Activated CD8-positive, alpha-beta memory T cell treated with anti-CD3 and anti-CD28 coated beads, Interleukin-2, amount 10 ng/mL, durations not matched to agents 7 days and 5 days (primary cell): ENCODE measurements at regions of chr1 and their contacts with region 1.

Region 1: GRCh38 chr1:31923901-31924535 is 14.2 kb downstream of the PTP4A2 start:
- DNase-seq: no peak
- ATAC-seq: no peak
- H3K4me3 Mint-ChIP-seq: peak overlapping the region; percentile 70
- H3K27ac Mint-ChIP-seq: peak overlapping the region; percentile 89
- H3K4me1 Mint-ChIP-seq: peaks cover 70% of the 10 kb centered on the region
- H3K27me3 Mint-ChIP-seq: no peaks in the 10 kb centered on the region

Region 2: DNA sequence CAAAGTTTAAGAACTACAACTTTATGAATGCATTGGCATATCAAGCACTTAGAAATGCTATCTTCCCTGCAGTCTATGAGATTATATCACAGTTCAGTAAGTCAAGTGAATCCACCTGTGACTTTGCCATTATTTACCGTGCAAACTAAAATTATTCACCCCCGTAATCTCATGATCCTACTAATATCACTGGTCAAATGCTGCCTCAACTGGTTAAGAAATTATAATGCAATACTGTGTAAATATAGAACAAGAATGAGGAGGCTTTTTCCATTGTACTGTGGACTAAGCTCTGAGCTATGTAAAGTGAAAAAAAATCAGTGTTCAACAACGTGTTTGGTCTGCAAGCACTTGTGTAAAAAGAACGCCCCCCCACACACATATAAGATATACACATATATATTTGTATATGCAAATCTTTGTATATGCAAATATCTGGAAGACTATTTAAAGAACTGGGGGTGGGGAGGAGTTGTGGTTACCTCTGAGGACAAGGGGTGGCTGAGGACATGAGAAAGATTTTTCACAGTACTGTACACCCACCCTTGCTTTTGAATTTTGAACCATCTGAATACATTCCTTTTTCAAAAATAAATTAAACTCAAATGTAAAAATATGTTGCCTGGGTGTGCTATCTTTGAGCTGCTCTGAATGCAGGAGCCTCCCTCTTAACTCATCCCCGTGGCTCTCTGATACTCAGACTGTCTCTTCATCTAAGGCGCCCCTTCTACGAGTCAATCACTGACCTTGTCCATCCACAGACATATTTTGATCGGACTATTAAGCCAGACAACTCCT is 42.9 kb before region 1 on chr1:
- CTCF ChIA-PET with region 1: no interaction called
- DNase-seq: no peak
- ATAC-seq: no peak
- H3K4me3 Mint-ChIP-seq: no peak overlapping the region
- H3K27ac Mint-ChIP-seq: no peak overlapping the region
- H3K4me1 Mint-ChIP-seq: peaks cover 9% of the 10 kb centered on the region
- H3K27me3 Mint-ChIP-seq: no peaks in the 10 kb centered on the region

Region 3: GRCh38 chr1:31910933-31911332 is 13.1 kb before region 1 on chr1:
- CTCF ChIA-PET with region 1: interaction called, 14 read pairs
- DNase-seq: no peak
- ATAC-seq: peak; percentile 69
- H3K4me3 Mint-ChIP-seq: no peak overlapping the region
- H3K27ac Mint-ChIP-seq: peak overlapping the region; percentile 47
- H3K4me1 Mint-ChIP-seq: peaks cover 64% of the 10 kb centered on the region
- H3K27me3 Mint-ChIP-seq: no peaks in the 10 kb centered on the region

Region 4: DNA sequence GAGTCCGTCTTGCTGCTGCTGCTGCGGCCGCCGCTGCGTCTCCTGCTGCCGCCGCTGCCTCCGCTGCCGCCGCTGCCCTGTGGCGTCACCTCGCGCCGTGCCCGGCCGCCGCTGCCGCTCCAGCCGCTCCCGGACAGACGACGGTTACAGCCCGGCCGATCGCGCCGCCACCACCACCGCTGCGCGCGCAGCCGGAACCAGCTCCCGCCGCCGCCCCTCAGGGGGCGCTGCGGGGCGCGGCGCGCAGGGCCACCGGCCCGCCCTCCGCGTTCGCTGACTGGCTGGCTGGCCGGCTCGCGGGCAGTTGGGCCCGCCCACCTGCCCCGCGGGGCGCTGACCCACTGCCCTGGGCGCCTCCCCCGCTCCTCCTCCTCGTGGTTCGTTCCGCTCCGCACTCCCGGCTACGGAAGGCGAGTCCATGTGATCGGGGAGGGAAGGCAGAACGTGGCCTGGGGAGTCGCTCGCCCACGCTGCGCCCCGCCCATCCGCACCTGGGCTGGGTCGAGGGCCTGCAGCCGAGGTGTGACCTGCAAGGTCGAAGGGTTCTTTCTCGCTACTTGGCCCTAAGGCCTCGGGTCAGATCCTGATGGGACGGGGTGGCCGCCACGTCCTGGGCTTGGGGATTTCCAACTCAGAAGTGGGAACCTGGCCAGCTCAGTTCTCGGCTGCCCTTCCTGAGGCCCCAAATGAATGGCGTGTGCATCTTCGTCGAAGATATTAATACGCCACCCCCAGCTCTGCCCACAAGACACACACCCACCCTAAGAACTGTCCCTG is 14.3 kb after region 1 on chr1 and contains the start of gene PTP4A2:
- CTCF ChIA-PET with region 1: interaction called, 45 read pairs
- DNase-seq: peak; percentile 94
- ATAC-seq: peak; percentile 71
- H3K4me3 Mint-ChIP-seq: peak within 1 kb of the TSS; percentile 99
- H3K27ac Mint-ChIP-seq: peak within 1 kb of the TSS; percentile 98
- H3K4me1 Mint-ChIP-seq: peaks cover 69% of the 10 kb centered on the region
- H3K27me3 Mint-ChIP-seq: no peaks in the 10 kb centered on the region
- total RNA-seq, gene PTP4A2: 401 to 507 TPM

Region 5: DNA sequence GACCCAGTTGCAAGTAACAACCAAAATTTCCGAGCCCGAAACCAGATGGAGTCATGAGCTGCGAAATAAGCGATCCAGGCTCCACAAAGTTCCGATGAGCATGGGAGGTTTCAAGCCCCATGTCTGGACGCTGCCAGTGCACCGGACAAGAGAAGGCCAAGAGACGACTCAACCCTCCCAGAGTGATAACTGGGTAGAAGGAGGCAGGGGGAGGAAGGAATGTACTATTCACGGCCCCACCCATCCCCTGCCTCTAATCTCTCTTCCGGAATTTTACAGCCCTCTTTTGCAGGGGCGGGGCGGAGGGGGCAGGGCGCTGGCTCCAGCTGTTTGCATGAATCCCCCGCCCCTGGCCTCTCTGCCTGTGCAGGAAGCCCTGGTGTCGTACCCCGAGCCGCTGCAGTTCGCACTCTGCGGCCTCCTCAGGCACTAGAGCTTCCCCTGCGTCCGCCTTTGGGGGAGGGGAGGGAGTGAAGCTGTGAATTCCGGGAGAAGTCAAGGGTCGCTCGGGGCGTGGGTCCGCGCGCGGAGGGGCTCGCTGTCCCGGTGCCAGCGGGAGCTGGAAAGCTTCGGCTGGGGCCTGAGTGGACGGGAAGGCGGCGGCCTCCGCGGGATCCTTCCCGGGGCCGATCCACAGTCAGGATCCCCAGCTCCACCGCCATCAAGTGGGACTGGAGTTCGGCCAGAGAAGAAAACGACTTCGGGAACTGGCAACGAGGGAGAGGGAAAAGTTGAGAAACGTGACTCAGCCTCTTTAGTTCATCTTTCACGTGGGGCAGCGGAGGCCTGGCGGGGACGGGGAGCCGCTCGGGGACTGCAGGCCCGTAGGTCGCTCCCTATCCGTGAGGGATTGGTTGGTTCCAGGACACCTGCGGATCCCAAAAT is 20.4 kb after region 1 on chr1:
- CTCF ChIA-PET with region 1: interaction called, 43 read pairs
- DNase-seq: peak; percentile 97
- ATAC-seq: peak; percentile 67
- H3K4me3 Mint-ChIP-seq: peak overlapping the region; percentile 77
- H3K27ac Mint-ChIP-seq: peak overlapping the region; percentile 96
- H3K4me1 Mint-ChIP-seq: peaks cover 61% of the 10 kb centered on the region
- H3K27me3 Mint-ChIP-seq: no peaks in the 10 kb centered on the region

Region 6: DNA sequence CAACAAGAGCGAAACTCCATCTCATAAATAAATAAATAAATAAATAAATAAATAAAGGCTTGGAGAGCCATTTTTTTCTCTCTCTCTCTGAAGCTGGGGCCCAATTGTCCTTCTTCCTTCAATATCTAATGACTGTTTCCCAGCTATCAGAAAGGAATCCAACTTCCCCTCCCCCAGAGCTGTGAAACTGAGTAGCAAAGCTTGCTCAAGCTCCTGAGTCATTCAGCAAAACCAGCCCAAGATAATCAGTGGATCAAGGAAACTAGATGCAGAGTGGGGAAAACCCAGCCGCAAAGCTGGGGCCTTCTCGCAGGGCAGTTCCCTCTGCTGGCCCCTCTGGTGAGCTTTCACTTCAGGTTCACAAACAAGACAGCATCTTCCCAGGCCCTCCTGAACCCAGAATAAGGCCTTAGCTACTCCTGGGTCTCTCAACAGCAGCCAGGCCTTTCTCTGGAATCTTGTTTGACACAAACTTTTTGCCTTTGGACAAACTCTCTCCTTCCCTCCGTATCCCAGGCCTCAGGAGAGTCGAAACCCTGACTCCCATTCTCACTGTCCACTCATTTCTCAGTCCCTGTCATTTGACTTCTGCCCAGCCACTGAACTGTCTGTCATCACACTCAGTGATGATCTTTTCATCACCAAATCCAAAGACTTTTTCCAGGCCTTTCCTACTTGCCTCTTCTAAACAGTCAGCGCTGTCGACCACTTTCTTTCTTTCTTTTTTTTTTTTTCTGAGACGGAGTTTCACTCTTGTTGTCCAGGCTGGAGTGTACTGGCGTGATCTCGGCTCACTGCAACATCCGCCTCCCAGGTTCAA is 32.1 kb after region 1 on chr1:
- CTCF ChIA-PET with region 1: interaction called, 56 read pairs
- DNase-seq: peak; percentile 93
- ATAC-seq: peak; percentile 82
- H3K4me3 Mint-ChIP-seq: peak overlapping the region; percentile 48
- H3K27ac Mint-ChIP-seq: peak overlapping the region; percentile 84
- H3K4me1 Mint-ChIP-seq: peaks cover 86% of the 10 kb centered on the region
- H3K27me3 Mint-ChIP-seq: no peaks in the 10 kb centered on the region

Region 7: GRCh38 chr1:31961536-31961935 is 37.5 kb after region 1 on chr1:
- CTCF ChIA-PET with region 1: interaction called, 56 read pairs
- DNase-seq: no peak
- ATAC-seq: no peak
- H3K4me3 Mint-ChIP-seq: no peak overlapping the region
- H3K27ac Mint-ChIP-seq: peak overlapping the region; percentile 78
- H3K4me1 Mint-ChIP-seq: peaks cover 74% of the 10 kb centered on the region
- H3K27me3 Mint-ChIP-seq: peaks cover 3% of the 10 kb centered on the region

Region 8: GRCh38 chr1:31984419-31985347 is 60.7 kb after region 1 on chr1:
- CTCF ChIA-PET with region 1: no interaction called
- DNase-seq: peak; percentile 53
- ATAC-seq: peak; percentile 79
- H3K4me3 Mint-ChIP-seq: peak overlapping the region; percentile 17
- H3K27ac Mint-ChIP-seq: peak overlapping the region; percentile 87
- H3K4me1 Mint-ChIP-seq: peaks cover 48% of the 10 kb centered on the region
- H3K27me3 Mint-ChIP-seq: no peaks in the 10 kb centered on the region

Region 9: DNA sequence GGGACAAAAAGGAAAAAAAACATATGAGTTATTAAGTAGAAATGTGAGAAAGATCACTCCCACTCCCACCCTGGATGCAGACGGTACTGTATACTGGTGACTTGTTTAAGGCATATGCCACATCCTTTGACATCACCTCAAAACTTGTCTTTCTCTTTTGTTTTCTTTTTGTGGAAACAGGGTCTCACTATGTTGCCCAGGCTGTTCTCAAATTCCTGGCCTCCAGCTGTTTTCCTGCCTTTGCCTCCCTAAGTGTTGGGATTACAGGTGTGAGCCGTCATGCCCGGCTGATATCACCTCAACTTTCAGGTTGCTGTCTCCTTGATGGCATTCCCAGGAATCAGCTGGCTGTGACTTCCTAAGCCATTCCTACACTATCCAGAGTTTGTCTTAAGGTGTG is 71.2 kb after region 1 on chr1:
- CTCF ChIA-PET with region 1: no interaction called
- DNase-seq: no peak
- ATAC-seq: peak; percentile 61
- H3K4me3 Mint-ChIP-seq: no peak overlapping the region
- H3K27ac Mint-ChIP-seq: no peak overlapping the region
- H3K4me1 Mint-ChIP-seq: peaks cover 15% of the 10 kb centered on the region
- H3K27me3 Mint-ChIP-seq: no peaks in the 10 kb centered on the region

Region 10: GRCh38 chr1:32179443-32180185 is 255.6 kb after region 1 on chr1 and contains the start of gene TXLNA:
- CTCF ChIA-PET with region 1: no interaction called
- DNase-seq: peak; percentile 95
- ATAC-seq: peak; percentile 91
- H3K4me3 Mint-ChIP-seq: peak within 1 kb of the TSS; percentile 81
- H3K27ac Mint-ChIP-seq: peak within 1 kb of the TSS; percentile 98
- H3K4me1 Mint-ChIP-seq: peaks cover 41% of the 10 kb centered on the region
- H3K27me3 Mint-ChIP-seq: no peaks in the 10 kb centered on the region
- total RNA-seq, gene TXLNA: 85.8 to 104 TPM